Aorta (tissue), 5 donors: ENCODE measurements at regions of chr1 and their contacts with region 1.

Region 1: DNA sequence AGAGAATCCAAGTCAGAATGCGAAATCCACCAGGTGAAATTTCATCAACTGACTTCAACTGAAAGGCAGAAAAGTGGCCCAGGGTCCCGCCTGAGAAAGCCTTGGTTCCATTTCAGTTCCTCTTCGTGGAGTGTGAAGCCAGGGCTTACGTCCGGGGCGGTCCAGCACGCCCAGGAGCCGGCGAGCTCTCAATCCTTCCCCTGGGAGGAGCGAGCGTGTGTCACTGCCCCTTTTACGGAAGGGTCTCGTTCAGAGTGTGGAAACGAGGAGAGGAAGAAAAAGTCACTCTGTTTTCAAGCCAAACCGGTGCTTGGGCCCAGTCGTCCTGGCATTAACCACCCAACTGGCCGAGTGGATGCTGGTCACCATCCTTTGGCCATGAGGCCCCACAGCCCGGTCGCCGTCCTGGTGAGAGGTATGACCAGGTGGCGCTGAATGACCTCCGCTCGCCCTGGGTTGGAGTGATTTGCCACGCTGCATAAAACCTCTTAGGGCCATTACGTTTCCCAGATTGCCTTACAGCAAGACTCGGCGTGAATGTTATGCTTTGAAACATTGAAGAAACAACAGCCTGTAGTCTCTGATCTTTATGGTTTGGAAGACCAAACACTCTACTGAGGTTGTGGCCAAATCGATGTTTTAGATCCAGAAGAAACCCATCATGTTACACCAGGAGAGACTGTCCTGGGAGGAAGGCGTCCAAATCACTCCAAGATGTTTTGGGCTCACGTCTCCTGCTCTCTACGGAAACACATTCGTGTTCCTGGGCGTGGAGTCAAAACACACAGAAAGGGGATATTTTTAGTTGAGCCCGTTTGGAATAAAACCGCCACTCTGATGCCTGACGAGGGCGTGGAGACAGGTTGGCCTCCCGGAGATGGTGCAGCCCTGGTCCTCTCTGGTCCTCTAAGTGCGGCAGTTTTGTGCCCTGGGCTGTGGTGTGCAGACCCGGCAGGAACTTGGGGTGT is 93.6 kb upstream of the ACTRT2 start:
- DNase-seq: peak; percentile 69 to 89
- ATAC-seq: peak; percentile 67
- H3K4me3 ChIP-seq: no peak overlapping the region
- H3K27ac ChIP-seq: peak overlapping the region; percentile 37 to 87
- H3K4me1 ChIP-seq: no peaks in the 10 kb centered on the region
- H3K27me3 ChIP-seq: no peaks in the 10 kb centered on the region

Region 2: GRCh38 chr1:2801535-2802291 is 126.0 kb before region 1 on chr1 and contains the start of gene TTC34:
- intact Hi-C with region 1: no loop called
- DNase-seq: peak; percentile 49 to 75
- ATAC-seq: no peak
- H3K4me3 ChIP-seq: no peak within 1 kb of the TSS
- H3K27ac ChIP-seq: no peak within 1 kb of the TSS
- H3K4me1 ChIP-seq: no peaks in the 10 kb centered on the region
- H3K27me3 ChIP-seq: no peaks in the 10 kb centered on the region
- total RNA-seq, gene TTC34: 0.55 to 1.3 TPM

Region 3: GRCh38 chr1:2979191-2980072 is 51.8 kb after region 1 on chr1:
- intact Hi-C with region 1: loop called in 1 of 2 experiments (anchors 5 kb)
- DNase-seq: peak in 1 of 2 donors; percentile 83
- ATAC-seq: peak; percentile 11
- H3K4me3 ChIP-seq: no peak overlapping the region
- H3K27ac ChIP-seq: peak overlapping the region in 1 of 2 donors; percentile 4
- H3K4me1 ChIP-seq: no peaks in the 10 kb centered on the region
- H3K27me3 ChIP-seq: no peaks in the 10 kb centered on the region

Region 4: GRCh38 chr1:3000671-3001470 is 73.2 kb after region 1 on chr1:
- intact Hi-C with region 1: loop called (anchors 5 kb)
- DNase-seq: peak in 1 of 2 donors; percentile 68
- ATAC-seq: no peak
- H3K4me3 ChIP-seq: no peak overlapping the region
- H3K27ac ChIP-seq: no peak overlapping the region
- H3K4me1 ChIP-seq: peaks cover 3% of the 10 kb centered on the region in 2 donors
- H3K27me3 ChIP-seq: no peaks in the 10 kb centered on the region